Calu3 (cell line): ENCODE measurements at regions of chr2 and their contacts with region 1.

Region 1: DNA sequence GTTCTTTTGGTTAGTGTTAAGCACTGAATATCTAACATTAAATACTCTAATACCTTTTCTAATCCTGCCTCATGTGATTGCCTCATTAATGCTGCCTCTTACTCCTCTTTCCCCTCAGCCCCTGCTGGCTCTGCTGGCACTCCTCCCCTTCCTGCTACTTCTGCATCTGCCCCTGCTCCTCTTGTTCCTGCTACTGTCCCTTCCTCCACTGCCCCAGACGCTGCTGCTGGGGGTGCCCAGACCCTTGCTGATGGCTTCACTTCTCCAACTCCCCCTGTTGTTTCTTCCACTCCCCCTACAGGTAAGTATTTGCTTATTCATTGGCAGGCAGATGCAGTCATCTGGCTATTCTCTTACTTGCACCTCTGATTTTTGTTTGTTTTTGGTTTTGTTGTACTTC is 68.5 kb downstream of the ABI2 start:
- DNase-seq: peak; percentile 18
- H3K4me3 Mint-ChIP-seq: no peak overlapping the region
- H3K27ac Mint-ChIP-seq: no peak overlapping the region
- H3K4me1 Mint-ChIP-seq: peaks cover 36% of the 10 kb centered on the region
- H3K27me3 Mint-ChIP-seq: no peaks in the 10 kb centered on the region
- CTCF ChIP-seq: peak; percentile 62

Region 2: GRCh38 chr2:203061346-203061745 is 335.3 kb before region 1 on chr2:
- CTCF ChIA-PET with region 1: no interaction called
- intact Hi-C with region 1: no loop called
- DNase-seq: peak; percentile 2
- H3K4me3 Mint-ChIP-seq: no peak overlapping the region
- H3K27ac Mint-ChIP-seq: peak overlapping the region; percentile 56
- H3K4me1 Mint-ChIP-seq: peaks cover 16% of the 10 kb centered on the region
- H3K27me3 Mint-ChIP-seq: no peaks in the 10 kb centered on the region
- CTCF ChIP-seq: no peak

Region 3: GRCh38 chr2:203330434-203330833 is 66.2 kb before region 1 on chr2:
- CTCF ChIA-PET with region 1: no interaction called
- intact Hi-C with region 1: loop called (anchors 5 kb)
- DNase-seq: no peak
- H3K4me3 Mint-ChIP-seq: peak overlapping the region; percentile 67
- H3K27ac Mint-ChIP-seq: peak overlapping the region; percentile 45
- H3K4me1 Mint-ChIP-seq: peaks cover 36% of the 10 kb centered on the region
- H3K27me3 Mint-ChIP-seq: no peaks in the 10 kb centered on the region
- CTCF ChIP-seq: no peak